ENCODE measurements at regions of chr1 and their contacts with region 1.

Region 1: GRCh38 chr1:114346480-114347029 is 164.4 kb downstream of the TRIM33 start:
- DNase-seq: peak; percentile 92 to 95 (median 94)
- H3K4me3 ChIP-seq: peak overlapping the region; percentile 48 to 74 (median 49)
- H3K4me3 Mint-ChIP-seq: peak overlapping the region; percentile 81 to 100
- H3K27ac ChIP-seq: peak overlapping the region in 1 of 2 donors; percentile 63
- H3K27ac Mint-ChIP-seq: peak overlapping the region in 6 of 7 donors; percentile 11 to 89 (median 78)
- H3K4me1 ChIP-seq: peaks cover 24 to 30% of the 10 kb centered on the region in 2 donors
- H3K4me1 Mint-ChIP-seq: peaks cover 28% of the 10 kb centered on the region
- H3K27me3 ChIP-seq: no peaks in the 10 kb centered on the region
- H3K27me3 Mint-ChIP-seq: peaks cover 4 to 8% (median 7%) of the 10 kb centered on the region in 3 donors
- CTCF ChIP-seq: peak; percentile 100

Region 2: DNA sequence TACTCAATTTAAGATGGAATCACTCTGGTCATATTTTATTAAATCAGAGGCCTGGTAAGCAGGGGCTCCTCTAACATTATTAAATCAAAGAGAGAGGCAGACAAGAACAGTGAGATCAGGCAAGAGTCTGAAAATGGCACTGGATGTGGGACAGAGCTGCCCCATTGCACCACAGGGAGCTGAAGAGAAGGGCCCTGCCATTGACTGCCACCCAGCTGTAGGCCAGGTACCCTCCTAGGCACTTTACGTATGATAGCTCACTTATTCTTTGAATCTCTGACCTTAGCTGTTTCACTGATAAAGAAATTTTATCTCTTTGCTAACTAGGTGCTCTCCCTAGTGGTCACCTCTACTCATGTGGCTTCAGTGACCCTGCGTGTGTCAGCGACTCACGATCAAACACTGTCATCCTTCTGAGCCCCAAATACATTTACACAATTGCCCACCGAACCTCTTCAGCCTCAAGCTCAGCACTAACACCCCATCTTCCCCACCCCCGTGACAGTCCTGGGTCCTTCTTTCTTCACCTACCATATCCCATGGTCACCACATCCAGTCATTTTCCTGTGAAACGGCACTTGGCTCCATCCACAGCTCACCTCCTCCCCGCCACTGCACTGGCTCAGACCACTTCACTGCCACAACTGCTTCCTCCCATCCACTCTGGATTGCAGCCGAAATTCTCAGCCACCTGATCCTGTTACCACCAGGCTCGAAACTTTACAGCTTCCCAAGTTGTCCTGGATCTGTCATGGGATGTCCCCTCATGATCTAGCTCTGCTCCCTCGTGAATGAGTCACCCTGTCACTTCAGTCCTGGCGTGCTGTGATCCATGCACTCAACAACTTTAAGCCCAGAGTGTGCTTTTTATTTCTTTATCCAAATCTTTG is 95.6 kb before region 1 on chr1:
- intact Hi-C with region 1: no loop called
- DNase-seq: no peak
- H3K4me3 ChIP-seq: no peak overlapping the region
- H3K4me3 Mint-ChIP-seq: no peak overlapping the region
- H3K27ac ChIP-seq: no peak overlapping the region
- H3K27ac Mint-ChIP-seq: no peak overlapping the region
- H3K4me1 ChIP-seq: no peaks in the 10 kb centered on the region
- H3K4me1 Mint-ChIP-seq: no peaks in the 10 kb centered on the region
- H3K27me3 ChIP-seq: no peaks in the 10 kb centered on the region
- H3K27me3 Mint-ChIP-seq: peaks cover 4 to 7% (median 4%) of the 10 kb centered on the region in 3 donors
- CTCF ChIP-seq: no peak

Region 3: DNA sequence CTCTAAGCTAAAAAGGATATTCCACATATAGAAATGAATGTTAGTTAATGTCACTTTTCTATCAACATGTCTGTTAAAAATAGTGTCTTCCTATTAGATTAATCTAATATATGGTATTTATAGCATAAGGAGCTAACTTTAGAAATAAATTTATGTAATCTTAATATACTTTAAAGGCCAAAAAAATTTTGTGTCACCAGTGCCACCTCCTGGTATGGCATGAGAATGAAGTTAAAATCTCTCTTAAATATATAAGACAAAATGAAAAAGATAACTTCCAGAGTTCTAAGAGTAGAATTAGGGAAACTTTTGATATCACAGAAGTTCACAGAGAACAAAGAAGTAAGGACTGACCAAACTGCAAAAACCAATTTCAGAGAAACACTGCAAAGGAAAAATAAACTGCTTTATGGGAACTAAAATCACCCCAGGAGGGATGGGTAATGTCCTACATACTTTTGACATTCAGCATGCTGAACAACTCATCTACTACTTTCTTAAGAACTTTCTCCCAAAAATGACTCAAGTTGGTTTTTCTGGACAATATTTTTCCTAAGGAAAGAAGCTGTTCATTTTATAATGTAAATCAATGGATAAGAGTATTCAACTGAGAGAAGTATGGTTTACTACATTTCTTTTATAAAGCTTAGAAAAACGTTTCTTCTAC is 81.7 kb after region 1 on chr1:
- intact Hi-C with region 1: loop called (anchors 5 kb)
- DNase-seq: no peak
- H3K4me3 ChIP-seq: no peak overlapping the region
- H3K4me3 Mint-ChIP-seq: no peak overlapping the region
- H3K27ac ChIP-seq: no peak overlapping the region
- H3K27ac Mint-ChIP-seq: no peak overlapping the region
- H3K4me1 ChIP-seq: no peaks in the 10 kb centered on the region
- H3K4me1 Mint-ChIP-seq: no peaks in the 10 kb centered on the region
- H3K27me3 ChIP-seq: no peaks in the 10 kb centered on the region
- H3K27me3 Mint-ChIP-seq: no peaks in the 10 kb centered on the region
- CTCF ChIP-seq: peak; percentile 65

Region 4: DNA sequence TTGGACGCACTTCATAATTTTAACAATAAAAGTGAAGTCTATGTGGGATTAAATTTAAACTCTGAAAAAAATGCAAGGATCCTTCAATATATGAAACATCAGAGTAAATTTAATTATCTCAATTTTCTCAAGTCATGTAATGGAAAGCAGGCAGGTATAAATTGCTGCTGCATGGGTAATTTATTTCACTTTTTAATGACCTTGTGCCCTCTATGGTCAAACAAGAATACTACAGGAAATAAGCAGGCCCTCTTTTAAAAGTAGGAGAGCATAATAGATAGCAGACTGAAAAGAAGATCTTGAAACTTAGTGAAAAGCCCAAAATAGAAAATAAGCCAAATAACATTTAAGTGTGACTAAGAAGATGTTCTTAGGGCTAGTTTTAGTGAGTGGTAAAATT is 212.0 kb after region 1 on chr1:
- intact Hi-C with region 1: loop called in 1 of 2 experiments (anchors 10 kb)
- DNase-seq: peak in 1 of 3 donors; percentile 14
- H3K4me3 ChIP-seq: no peak overlapping the region
- H3K4me3 Mint-ChIP-seq: no peak overlapping the region
- H3K27ac ChIP-seq: no peak overlapping the region
- H3K27ac Mint-ChIP-seq: peak overlapping the region in 1 of 7 donors; percentile 6
- H3K4me1 ChIP-seq: peaks cover 13 to 16% of the 10 kb centered on the region in 2 donors
- H3K4me1 Mint-ChIP-seq: peaks cover 26% of the 10 kb centered on the region
- H3K27me3 ChIP-seq: no peaks in the 10 kb centered on the region
- H3K27me3 Mint-ChIP-seq: peaks cover 0 to 4% (median 2%) of the 10 kb centered on the region in 3 donors
- CTCF ChIP-seq: peak; percentile 69

Measured in CD14-positive monocyte (primary cell).